Endothelial cell of umbilical vein (primary cell): ENCODE measurements at regions of chr7 and their contacts with region 1.

Region 1: DNA sequence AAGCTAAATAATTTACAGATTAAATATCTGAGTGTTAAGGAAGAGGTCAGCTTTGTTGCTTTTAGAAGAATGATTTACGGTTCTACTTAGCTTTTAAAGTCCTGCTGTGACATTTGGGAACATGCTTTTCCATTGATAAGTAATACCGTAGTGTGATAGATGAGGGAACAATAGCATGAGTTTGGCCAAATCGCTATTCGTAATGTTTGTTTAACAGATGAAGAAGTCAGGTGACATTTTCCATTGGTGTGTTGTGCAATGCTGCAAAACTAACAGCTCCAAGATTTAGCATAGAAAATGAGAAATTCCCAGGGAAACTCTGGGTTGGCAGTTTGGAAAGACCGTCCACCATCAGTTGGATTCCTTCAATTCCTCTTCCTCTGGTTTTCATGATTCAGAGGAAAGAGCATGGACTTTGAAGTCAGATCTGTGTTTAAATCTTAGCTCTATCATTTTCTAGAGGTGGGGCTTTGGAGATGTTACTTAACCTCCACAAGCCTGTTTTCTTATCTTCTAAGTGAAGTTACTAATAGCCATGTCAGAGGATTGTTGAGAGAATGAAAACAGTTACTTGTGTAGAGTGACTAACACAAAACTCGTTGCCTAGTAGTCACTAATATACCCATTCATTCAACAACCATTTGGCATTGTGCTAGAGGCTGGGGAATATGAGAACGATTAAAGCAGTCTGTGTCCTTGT is 140.4 kb upstream of the BMPER start:
- DNase-seq: peak; percentile 94
- H3K4me3 ChIP-seq: no peak overlapping the region
- H3K27ac ChIP-seq: peak overlapping the region; percentile 57
- H3K4me1 ChIP-seq: peaks cover 12% of the 10 kb centered on the region
- H3K27me3 ChIP-seq: no peaks in the 10 kb centered on the region
- CTCF ChIP-seq: no peak
- POLR2A ChIP-seq: no peak

Region 2: DNA sequence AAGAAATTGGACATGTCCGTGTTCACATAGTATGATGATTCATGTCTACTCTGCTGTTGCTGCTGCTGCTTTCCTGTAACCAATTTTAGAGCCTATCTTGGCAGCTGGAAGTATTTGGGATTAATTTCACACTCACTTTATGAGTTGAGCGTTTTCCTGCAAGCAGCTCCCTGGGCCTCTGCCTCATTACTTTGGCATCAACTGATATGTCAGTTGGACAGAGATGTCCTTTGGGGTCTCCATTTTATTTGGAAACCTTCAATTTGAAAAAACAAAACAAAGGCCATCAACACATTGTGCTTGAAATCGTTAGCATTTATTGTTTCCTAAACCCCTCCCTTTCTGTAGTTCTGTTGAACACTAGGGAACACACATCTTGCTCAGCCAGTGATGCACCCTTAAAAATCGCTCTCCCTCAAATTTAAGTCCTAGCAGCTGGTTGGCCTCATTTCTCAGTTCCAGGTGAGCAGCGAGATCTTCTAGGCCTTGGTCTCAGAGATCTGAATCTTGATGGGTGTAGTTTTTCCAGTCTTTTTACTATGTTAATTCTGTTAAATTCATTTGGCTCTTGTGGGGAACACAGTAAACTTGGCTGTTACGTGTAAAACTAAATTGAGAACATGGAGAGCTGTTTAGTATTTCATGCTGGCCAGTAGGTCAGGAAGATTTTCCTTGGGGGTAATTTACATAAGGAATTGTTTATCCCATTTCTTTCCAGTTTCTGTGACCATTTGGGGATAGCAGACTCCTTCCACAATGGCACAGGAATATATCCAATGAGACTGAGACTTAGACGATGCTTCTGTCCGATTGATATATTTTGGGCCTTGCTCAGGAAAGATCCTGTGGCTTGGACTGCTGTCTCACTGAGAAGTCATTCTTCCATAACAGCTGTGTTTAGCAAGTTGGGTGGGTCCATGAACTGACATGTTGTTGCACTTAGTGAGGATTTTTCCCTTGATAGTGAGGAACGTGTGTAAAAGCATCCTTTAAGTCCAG is 263.9 kb before region 1 on chr7:
- CTCF ChIA-PET with region 1: no interaction called
- POLR2A ChIA-PET with region 1: no interaction called
- dilution Hi-C with region 1: no loop called
- intact Hi-C with region 1: no loop called
- DNase-seq: no peak
- H3K4me3 ChIP-seq: no peak overlapping the region
- H3K27ac ChIP-seq: no peak overlapping the region
- H3K4me1 ChIP-seq: no peaks in the 10 kb centered on the region
- H3K27me3 ChIP-seq: no peaks in the 10 kb centered on the region
- CTCF ChIP-seq: no peak
- POLR2A ChIP-seq: no peak

Region 3: GRCh38 chr7:33685981-33686683 is 78.8 kb before region 1 on chr7:
- CTCF ChIA-PET with region 1: no interaction called
- POLR2A ChIA-PET with region 1: no interaction called
- dilution Hi-C with region 1: no loop called
- intact Hi-C with region 1: no loop called
- DNase-seq: no peak
- H3K4me3 ChIP-seq: no peak overlapping the region
- H3K27ac ChIP-seq: no peak overlapping the region
- H3K4me1 ChIP-seq: no peaks in the 10 kb centered on the region
- H3K27me3 ChIP-seq: no peaks in the 10 kb centered on the region
- CTCF ChIP-seq: no peak
- POLR2A ChIP-seq: no peak

Region 4: DNA sequence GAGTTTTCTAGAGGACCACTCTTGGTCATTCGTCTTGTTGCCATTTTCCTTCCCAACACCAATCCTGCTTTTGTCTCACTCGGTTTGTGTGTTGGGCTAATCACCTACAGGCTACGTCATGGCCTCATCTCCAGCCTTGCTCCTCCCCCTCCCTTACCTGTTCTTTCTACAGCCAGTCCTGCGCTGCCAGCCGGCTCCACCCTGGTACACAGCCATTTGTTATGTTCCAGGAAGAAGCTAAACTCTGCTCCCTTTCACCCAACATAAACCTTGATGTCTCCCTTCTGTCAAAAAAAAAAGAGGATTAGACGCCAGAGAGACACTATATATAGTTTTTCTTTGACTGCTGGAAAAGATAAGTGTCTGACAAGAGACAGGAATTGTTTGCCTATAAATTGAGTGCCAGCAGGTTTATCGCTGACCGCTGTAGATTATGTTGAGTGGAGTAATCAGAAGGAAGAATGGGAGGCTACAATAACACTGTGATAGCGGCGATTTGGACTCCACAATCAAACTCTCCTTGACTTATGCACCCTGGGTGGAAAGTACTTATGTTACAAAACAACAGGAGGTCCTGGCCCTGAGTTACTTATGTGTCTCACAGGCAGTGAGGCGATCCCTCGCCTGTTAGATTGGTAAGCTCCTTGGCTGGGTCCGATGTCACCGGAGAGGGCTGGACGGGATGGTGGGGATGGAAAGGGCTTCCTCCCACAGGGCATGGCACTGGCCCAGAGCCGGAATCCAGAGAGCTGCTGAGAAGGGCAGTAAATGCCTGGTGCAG is 30.8 kb before region 1 on chr7:
- CTCF ChIA-PET with region 1: no interaction called
- POLR2A ChIA-PET with region 1: no interaction called
- dilution Hi-C with region 1: no loop called
- intact Hi-C with region 1: no loop called
- DNase-seq: peak; percentile 82
- H3K4me3 ChIP-seq: no peak overlapping the region
- H3K27ac ChIP-seq: no peak overlapping the region
- H3K4me1 ChIP-seq: peaks cover 24% of the 10 kb centered on the region
- H3K27me3 ChIP-seq: no peaks in the 10 kb centered on the region
- CTCF ChIP-seq: no peak
- POLR2A ChIP-seq: no peak

Region 5: GRCh38 chr7:33789871-33790630 is 25.1 kb after region 1 on chr7:
- CTCF ChIA-PET with region 1: interaction called, 3 read pairs
- POLR2A ChIA-PET with region 1: no interaction called
- dilution Hi-C with region 1: no loop called
- intact Hi-C with region 1: loop called (anchors 2 kb)
- DNase-seq: peak; percentile 84
- H3K4me3 ChIP-seq: no peak overlapping the region
- H3K27ac ChIP-seq: peak overlapping the region; percentile 40
- H3K4me1 ChIP-seq: peaks cover 7% of the 10 kb centered on the region
- H3K27me3 ChIP-seq: no peaks in the 10 kb centered on the region
- CTCF ChIP-seq: no peak
- POLR2A ChIP-seq: no peak

Region 6: DNA sequence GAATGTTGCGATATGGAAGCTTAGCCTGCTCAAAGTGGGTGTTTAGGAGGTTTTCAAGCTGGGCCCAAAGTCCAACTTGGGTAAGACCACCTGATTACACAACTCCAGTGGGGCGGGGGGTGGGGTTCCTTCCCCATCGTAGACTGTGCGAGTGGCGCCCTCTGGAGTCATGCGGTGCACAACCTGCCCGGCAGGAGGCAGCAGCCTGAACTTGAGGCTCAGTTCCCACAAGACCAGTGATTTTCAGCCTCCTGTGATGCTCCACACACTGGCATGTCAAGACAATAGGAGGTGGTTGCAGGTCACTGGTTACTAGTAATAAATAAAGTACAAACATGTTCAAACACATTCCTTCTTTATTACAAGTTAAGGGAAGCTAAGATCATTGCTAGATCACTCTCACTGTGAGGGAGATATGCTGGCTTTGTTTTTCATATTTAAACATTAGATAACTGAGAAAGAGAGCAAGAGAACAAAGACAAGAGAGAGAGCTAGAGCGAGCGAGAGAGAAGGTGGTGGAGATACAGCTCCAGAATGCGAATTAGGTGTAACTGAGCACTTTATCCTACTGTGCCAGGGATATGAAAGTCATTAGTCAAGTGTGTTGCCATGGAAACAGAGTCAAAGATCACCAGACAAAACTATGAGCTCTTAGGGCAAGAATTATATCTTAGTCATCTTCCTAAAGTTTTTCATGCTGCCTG is 43.0 kb after region 1 on chr7:
- CTCF ChIA-PET with region 1: interaction called, 11 read pairs
- POLR2A ChIA-PET with region 1: no interaction called
- dilution Hi-C with region 1: no loop called
- intact Hi-C with region 1: loop called (anchors 2 kb)
- DNase-seq: peak; percentile 91
- H3K4me3 ChIP-seq: no peak overlapping the region
- H3K27ac ChIP-seq: peak overlapping the region; percentile 81
- H3K4me1 ChIP-seq: peaks cover 27% of the 10 kb centered on the region
- H3K27me3 ChIP-seq: no peaks in the 10 kb centered on the region
- CTCF ChIP-seq: peak; percentile 62 to 66
- POLR2A ChIP-seq: no peak

Region 7: GRCh38 chr7:34260279-34260678 is 495.4 kb after region 1 on chr7:
- CTCF ChIA-PET with region 1: no interaction called
- POLR2A ChIA-PET with region 1: no interaction called
- dilution Hi-C with region 1: no loop called
- intact Hi-C with region 1: no loop called
- DNase-seq: peak; percentile 57
- H3K4me3 ChIP-seq: no peak overlapping the region
- H3K27ac ChIP-seq: no peak overlapping the region
- H3K4me1 ChIP-seq: peaks cover 4% of the 10 kb centered on the region
- H3K27me3 ChIP-seq: no peaks in the 10 kb centered on the region
- CTCF ChIP-seq: no peak
- POLR2A ChIP-seq: no peak